Tibial artery (tissue), 4 donors: ENCODE measurements at regions of chr20 and their contacts with region 1.

Region 1: DNA sequence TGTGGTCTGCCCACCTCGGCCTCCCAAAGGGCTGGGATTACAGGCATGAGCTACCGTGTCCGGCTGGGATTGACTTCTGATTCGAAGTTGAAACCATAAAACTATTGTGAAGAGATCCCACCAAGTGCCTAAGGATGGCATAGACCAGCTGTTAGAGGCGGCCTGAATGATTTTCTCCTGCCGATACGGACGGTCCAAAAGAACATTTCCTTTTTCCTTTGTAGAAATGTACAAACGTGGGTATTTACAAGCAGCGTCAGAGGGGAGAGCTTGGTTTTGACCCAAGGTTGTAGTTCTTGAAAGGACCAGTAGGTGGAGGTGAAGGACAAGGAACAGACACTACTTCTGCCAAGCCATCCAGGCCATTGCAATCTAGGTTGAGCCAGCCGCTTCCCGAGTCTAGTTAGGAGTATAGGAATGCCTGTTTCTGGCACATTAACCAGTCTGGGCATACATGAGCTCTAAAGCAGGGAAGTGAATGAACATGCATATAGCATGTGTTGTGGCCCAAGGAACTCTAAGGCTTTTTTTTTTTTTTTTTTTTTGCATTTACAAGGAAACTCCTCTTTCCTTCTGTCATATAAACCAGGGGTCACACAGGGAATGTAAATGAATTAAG is 29.1 kb downstream of the MOCS3 start:
- DNase-seq: peak in 1 of 2 donors; percentile 70
- H3K4me3 ChIP-seq: no peak overlapping the region
- H3K27ac ChIP-seq: no peak overlapping the region
- H3K4me1 ChIP-seq: no peaks in the 10 kb centered on the region
- H3K27me3 ChIP-seq: peaks cover 0 to 42% of the 10 kb centered on the region in 2 donors
- CTCF ChIP-seq: peak; percentile 87 to 94

Region 2: DNA sequence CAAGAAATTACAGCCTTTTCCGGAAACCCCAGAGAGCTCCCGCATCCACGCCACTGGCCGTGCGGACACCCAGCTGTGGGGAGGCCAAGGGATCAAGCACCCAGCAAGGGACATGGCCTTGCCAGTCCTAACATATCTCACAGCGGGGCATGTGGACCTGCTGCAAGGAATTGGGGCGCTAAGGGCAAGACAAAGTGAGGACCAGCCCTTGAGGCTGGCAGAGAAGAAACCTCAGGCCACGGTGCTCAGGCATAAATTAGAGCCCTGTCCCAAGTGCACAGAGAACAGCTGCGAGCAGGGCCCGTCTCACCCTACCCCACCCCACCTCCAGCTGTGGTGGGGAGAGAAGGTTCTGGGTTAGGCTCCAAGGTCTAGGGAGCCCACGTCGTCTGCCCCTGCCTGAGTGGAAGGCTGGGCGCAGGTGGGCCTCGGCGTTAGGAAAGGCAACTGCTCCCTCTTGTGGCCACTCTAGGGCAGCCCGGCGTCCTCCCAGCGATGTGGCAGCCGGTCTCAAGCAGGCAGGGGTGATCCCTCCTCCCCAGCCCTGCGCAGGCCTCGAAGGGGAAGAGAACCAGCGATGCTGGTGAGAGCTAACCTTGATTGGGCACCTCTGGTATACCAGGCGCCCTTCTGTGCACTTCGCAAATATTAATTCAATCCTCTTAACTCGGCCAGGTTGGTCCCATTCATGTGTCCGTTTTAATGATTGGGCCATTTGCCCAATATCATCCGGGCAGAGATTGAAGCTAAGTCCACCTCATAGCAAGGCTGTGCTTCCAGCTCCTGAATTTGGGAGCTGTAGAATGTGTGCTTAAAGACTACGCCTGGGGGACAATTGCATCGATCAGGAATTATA is 319.0 kb after region 1 on chr20:
- intact Hi-C with region 1: loop called (anchors 5 kb)
- DNase-seq: peak; percentile 61 to 77
- H3K4me3 ChIP-seq: no peak overlapping the region
- H3K27ac ChIP-seq: no peak overlapping the region
- H3K4me1 ChIP-seq: peaks cover 0 to 7% (median 0%) of the 10 kb centered on the region in 4 donors
- H3K27me3 ChIP-seq: peaks cover 0 to 4% of the 10 kb centered on the region in 2 donors
- CTCF ChIP-seq: peak; percentile 84 to 85